Pancreas (tissue), 10 donors: ENCODE measurements at regions of chr6 and their contacts with region 1.

Region 1: GRCh38 chr6:31776989-31777666 is at the start of gene VWA7:
- DNase-seq: peak; percentile 78 to 93 (median 86)
- ATAC-seq: peak; percentile 77 to 88 (median 84)
- H3K4me3 ChIP-seq: peak within 1 kb of the TSS in 2 of 4 donors; percentile 18 to 31
- H3K27ac ChIP-seq: peak within 1 kb of the TSS; percentile 59 to 78 (median 68)
- H3K4me1 ChIP-seq: peaks cover 5 to 8% (median 6%) of the 10 kb centered on the region in 3 donors
- H3K27me3 ChIP-seq: no peaks in the 10 kb centered on the region
- CTCF ChIP-seq: no peak
- total RNA-seq, gene VWA7: 2.9 to 5.0 (median 4.3) TPM

Region 2: DNA sequence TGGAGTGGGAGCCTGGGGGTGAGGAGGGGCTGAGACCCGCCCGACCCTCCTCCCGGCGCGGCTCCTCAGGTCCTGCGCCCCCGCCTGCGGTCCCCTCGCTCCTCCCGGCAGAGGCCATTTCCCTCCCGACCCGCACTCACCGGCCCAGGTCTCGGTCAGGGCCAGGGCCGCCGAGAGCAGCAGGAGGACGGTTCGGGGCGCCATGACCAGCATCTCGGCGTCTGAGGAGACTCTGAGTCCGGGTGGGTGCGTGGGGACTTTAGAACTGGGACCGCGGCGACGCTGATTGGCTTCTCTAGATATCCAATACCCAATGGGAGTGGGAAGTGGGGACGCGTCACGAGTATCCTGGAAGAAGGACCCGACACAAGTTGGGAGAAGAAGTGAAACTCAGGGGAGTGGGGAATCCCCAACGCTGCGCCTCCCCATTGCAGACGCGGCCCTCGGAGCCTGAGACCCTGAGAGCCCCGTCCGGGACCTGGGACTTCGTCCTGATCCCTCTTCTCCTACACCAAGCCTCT is 420.1 kb before region 1 on chr6 and contains the start of gene HLA-B:
- intact Hi-C with region 1: no loop called
- DNase-seq: peak; percentile 44 to 87 (median 76)
- ATAC-seq: peak; percentile 92 to 97 (median 95)
- H3K4me3 ChIP-seq: peak within 1 kb of the TSS; percentile 5 to 51 (median 49)
- H3K27ac ChIP-seq: peak within 1 kb of the TSS; percentile 56 to 82 (median 64)
- H3K4me1 ChIP-seq: peaks cover 0 to 6% (median 0%) of the 10 kb centered on the region in 3 donors
- H3K27me3 ChIP-seq: no peaks in the 10 kb centered on the region
- CTCF ChIP-seq: no peak
- total RNA-seq, gene HLA-B: 141 to 1,089 (median 229) TPM

Region 3: DNA sequence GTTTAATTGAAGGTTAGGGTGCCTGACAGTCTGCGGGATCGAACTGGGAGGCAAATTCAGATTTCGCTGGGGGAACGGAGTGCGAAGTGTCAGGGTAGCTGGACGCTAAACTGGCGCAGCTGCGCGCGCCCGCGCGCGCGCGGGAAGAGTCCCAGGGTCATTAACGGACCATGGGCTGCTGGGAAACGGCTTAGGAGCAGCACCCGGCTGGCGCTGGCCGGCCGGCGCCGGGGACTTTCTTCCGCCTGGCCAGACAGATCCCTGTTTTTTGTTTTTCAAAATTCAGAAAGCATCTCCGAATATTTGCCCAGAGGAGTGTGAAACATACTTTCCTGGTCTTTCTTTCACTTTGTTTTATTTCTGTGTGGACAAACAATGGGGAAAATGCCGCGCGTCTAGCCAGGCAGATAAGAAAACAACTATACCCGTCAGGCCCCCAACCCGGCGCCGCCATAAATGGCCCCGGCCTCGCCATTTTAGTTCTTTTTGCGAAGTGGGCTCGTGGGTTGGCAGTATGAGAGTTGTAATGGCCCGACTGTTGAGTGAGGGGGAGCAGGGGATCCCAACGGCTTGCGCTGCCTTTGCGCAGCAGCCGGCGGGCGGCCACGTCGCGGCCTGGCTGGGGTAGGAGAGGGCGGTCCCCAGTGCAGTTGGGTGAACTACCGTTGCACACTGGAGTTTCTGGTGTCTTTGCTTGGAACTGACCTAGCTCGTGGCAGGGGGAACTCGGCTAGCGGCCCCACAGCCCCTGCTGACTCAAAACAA is 57.5 kb after region 1 on chr6:
- intact Hi-C with region 1: loop called in 1 of 3 experiments (anchors 10 kb)
- DNase-seq: peak; percentile 83 to 92 (median 89)
- ATAC-seq: peak; percentile 48 to 91 (median 71)
- H3K4me3 ChIP-seq: peak overlapping the region; percentile 54 to 87 (median 81)
- H3K27ac ChIP-seq: peak overlapping the region; percentile 74 to 92 (median 87)
- H3K4me1 ChIP-seq: peaks cover 12 to 35% (median 25%) of the 10 kb centered on the region in 3 donors
- H3K27me3 ChIP-seq: no peaks in the 10 kb centered on the region
- CTCF ChIP-seq: no peak